ENCODE measurements at regions of chr17 and their contacts with region 1.

Region 1: DNA sequence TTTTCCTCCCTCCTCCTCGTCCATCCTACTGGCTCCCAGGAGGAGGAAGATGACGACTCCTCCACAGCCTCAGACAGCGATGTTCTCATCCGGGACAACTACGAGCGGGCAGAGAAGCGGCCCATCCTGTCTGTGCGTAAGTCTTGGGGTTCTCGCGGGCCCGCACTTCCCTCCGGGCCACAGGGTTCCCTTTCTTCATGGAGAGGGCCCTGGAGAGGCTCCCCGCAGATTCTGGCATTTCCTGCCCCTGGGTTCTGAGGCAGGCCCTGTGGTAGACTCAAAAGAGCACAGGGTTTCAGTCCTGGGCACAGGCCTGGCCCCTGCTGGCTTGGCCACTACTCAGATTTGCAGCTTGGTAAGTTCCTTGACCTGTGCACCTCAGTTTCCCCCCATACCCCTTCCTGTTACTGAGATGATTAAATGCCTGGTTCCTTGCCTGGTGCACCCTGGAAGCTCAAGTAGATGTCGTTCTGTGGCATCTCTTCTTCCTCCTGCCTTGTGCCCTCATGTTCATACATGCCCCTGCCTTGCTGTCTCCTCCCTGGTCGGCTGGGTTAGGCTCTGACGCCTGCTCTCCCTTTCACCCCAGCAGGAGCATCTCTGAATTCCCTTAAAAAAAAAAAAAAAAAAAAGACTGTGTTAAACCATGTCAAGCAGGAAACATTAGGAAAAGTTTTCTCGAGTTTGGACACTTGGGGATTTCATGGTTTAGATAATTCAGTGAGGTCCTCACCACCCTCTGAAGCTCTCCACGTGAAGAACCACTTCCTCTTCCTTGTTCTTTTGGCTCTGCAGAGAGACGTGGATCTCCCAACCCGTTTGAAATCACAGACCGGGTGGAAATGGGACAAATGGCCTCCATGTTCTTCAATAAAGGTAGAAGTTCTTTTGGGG is 14.3 kb upstream of the NAT9 start:
- DNase-seq: peak in 1 of 3 donors; percentile 11
- H3K4me3 ChIP-seq: no peak overlapping the region
- H3K27ac ChIP-seq: no peak overlapping the region
- H3K4me1 ChIP-seq: peaks cover 3 to 34% (median 29%) of the 10 kb centered on the region in 4 experiments
- H3K27me3 ChIP-seq: no peaks in the 10 kb centered on the region

Region 2: GRCh38 chr17:74659898-74660297 is 130.5 kb before region 1 on chr17:
- CTCF ChIA-PET with region 1: interaction called, 18 read pairs
- POLR2A ChIA-PET with region 1: interaction called, 3 read pairs
- DNase-seq: no peak
- H3K4me3 ChIP-seq: no peak overlapping the region
- H3K27ac ChIP-seq: no peak overlapping the region
- H3K4me1 ChIP-seq: peaks cover 0 to 13% (median 6%) of the 10 kb centered on the region in 4 experiments
- H3K27me3 ChIP-seq: no peaks in the 10 kb centered on the region

Region 3: GRCh38 chr17:74759243-74759801 is 31.1 kb before region 1 on chr17:
- CTCF ChIA-PET with region 1: interaction called, 10 read pairs
- POLR2A ChIA-PET with region 1: no interaction called
- DNase-seq: peak; percentile 83 to 94 (median 93)
- H3K4me3 ChIP-seq: peak overlapping the region in 6 of 7 experiments; percentile 2 to 65 (median 44)
- H3K27ac ChIP-seq: peak overlapping the region; percentile 5 to 76
- H3K4me1 ChIP-seq: peaks cover 8 to 76% (median 66%) of the 10 kb centered on the region in 4 experiments
- H3K27me3 ChIP-seq: no peaks in the 10 kb centered on the region

Region 4: DNA sequence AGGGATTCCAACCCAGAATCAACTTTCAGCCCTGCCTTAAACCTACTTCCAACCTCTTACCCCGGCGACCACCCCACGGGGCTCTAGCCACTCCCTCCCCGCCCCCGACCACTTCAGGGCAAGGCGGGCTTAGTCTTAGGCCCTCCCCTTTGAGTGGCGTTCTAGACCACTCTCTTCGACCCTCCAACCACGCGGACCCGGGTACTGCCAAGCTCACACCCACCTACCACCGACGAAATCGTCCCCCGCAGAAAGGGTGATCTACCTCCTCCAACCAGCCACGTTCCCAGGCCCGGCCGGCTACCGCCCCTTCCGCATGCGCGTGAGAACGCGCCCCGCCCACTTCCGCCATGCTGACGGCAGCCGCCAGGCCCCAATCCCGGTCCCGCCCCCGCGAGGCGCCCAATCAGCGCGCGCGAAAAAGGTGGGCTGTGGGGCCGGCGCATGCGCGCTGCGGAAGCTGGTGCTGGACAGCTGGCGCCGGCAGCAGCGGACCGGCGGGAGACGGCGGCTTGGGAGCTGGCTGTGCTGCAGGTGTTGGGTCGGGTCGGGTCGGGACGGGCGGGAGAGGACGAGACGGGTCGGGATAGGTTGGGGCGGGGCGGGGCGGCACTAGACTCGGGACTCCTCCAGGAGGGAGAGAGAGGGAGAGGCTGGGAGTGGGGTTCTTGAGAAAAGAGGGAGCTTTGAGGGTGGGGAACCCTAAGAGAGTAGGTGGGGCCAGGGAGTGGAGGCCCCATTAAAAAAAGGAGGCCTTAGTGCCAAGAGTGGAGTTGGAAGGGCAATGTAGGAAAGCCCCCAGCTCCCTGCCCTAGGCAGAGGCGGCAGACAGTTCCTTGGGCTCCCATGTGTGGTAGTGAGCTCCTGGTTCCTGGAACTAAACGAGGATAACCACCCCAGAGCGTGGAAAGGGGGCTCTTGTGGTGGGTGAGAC is 14.1 kb before region 1 on chr17 and contains the start of gene NAT9:
- CTCF ChIA-PET with region 1: interaction called, 17 read pairs
- POLR2A ChIA-PET with region 1: no interaction called
- DNase-seq: peak; percentile 95 to 98 (median 97)
- H3K4me3 ChIP-seq: peak within 1 kb of the TSS; percentile 38 to 96 (median 82)
- H3K27ac ChIP-seq: peak within 1 kb of the TSS; percentile 73 to 86
- H3K4me1 ChIP-seq: peaks cover 20 to 56% (median 45%) of the 10 kb centered on the region in 4 experiments
- H3K27me3 ChIP-seq: no peaks in the 10 kb centered on the region

Region 5: GRCh38 chr17:74814453-74814852 is 24.0 kb after region 1 on chr17:
- CTCF ChIA-PET with region 1: interaction called, 66 read pairs
- POLR2A ChIA-PET with region 1: no interaction called
- DNase-seq: peak; percentile 21 to 47 (median 42)
- H3K4me3 ChIP-seq: no peak overlapping the region
- H3K27ac ChIP-seq: no peak overlapping the region
- H3K4me1 ChIP-seq: peaks cover 0 to 8% (median 2%) of the 10 kb centered on the region in 4 experiments
- H3K27me3 ChIP-seq: peaks cover 0 to 4% (median 0%) of the 10 kb centered on the region in 5 experiments

Region 6: DNA sequence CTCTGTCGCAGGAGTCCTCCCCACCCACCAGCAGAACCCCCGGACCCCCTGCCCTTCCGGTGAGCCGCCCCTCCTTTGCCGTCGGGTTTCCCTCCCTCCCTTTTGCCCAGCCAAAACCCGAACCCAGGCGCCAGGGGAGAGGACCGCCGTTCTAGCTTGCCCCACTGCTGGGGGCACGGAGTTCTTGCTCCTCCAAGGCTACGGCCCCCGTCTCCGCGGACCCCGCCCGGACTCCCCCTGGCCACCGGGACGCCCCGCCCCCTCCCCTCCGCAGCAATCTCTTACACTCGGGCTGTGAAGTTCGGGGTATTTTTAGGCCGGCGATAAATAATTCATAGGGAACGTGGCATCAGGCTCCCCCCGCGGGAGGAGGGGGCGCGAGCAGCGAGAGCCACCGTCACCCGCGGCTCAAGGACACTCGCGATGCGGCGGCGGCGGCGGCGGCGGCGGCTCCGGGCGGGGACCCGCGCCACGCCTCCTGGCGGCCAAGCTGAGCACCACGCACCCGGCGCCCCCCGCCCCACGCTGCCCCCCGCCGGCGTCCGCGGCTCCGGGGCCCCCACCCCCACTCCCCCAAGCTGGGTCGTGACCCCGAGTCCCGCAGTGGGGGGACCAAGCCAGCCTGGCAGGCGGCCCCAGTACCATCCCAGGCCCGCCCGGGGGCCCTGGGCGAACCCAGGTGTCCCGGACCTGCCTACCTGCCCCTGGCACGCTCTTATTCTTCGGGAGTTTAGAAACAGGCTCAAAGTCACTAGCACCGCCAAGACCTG is 69.2 kb after region 1 on chr17 and contains the start of gene GRIN2C:
- CTCF ChIA-PET with region 1: interaction called, 158 read pairs
- POLR2A ChIA-PET with region 1: no interaction called
- DNase-seq: peak in 2 of 3 donors; percentile 24 to 43
- H3K4me3 ChIP-seq: peak within 1 kb of the TSS in 4 of 7 experiments; percentile 19 to 52 (median 38)
- H3K27ac ChIP-seq: no peak within 1 kb of the TSS
- H3K4me1 ChIP-seq: peaks cover 0 to 28% (median 20%) of the 10 kb centered on the region in 4 experiments
- H3K27me3 ChIP-seq: peaks cover 0 to 72% (median 28%) of the 10 kb centered on the region in 5 experiments